ENCODE measurements at regions of chr10 and their contacts with region 1.

Region 1: DNA sequence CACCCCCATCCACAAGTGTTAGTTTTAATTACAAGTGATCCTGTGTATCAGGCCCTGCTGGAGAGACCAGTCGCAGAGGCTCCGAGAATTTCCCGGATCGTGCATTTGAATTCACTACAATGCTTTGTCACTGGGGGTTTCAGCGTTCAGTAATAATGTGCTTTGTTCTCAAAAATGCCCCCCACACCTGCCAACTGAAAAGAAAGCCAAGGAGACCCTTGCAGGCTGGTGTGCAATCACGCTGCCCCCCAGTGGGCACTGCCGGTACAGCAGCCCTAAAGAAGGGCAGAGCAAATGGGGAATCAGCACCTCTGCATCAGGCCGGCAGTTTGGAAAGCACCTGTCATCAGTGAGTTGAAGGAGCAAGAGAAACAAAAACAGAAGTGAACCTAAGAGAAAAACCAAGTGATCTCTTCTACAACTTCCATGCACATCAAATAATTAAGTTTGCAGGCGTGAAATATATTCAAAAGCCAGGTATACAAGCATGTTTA is 177.6 kb downstream of the PARD3 start:
- DNase-seq: peak; percentile 78
- H3K4me3 Mint-ChIP-seq: no peak overlapping the region
- H3K27ac Mint-ChIP-seq: no peak overlapping the region
- H3K4me1 Mint-ChIP-seq: peaks cover 8% of the 10 kb centered on the region
- H3K27me3 Mint-ChIP-seq: no peaks in the 10 kb centered on the region

Region 2: DNA sequence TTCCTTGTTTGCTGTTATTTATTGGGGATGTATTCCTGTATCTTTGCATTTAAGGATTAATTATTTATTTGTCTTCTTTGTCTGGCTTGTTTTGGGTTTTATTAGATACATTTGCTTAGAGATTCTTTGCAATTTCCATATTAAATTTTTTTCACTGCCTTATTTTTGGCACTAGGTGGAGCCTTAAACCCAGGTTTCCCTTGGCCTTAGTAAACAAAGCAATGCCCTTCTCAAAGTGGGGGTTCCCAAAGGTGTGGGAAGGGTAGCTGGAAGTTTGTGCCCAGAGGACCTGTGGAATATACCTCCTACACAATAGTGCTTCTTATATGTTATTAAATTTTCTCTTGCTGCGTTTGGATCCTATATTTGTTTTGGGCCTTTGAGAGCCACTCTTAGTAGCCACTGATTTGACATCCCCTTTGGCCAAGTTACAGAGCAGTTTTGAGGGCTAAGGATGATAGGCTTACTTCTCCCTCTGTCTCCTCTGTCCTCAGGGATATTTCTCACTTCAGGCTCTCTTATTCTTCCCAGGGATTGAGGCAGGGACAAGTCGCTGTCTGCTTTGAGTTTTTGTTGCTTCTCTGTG is 1841.8 kb before region 1 on chr10:
- CTCF ChIA-PET with region 1: no interaction called
- intact Hi-C with region 1: loop called (anchors 5 kb)
- DNase-seq: peak; percentile 17
- H3K4me3 Mint-ChIP-seq: no peak overlapping the region
- H3K27ac Mint-ChIP-seq: no peak overlapping the region
- H3K4me1 Mint-ChIP-seq: no peaks in the 10 kb centered on the region
- H3K27me3 Mint-ChIP-seq: no peaks in the 10 kb centered on the region

Region 3: GRCh38 chr10:33193057-33193700 is 1444.3 kb before region 1 on chr10:
- CTCF ChIA-PET with region 1: interaction called, 8 read pairs
- intact Hi-C with region 1: loop called (anchors 1 kb)
- DNase-seq: peak; percentile 89
- H3K4me3 Mint-ChIP-seq: no peak overlapping the region
- H3K27ac Mint-ChIP-seq: no peak overlapping the region
- H3K4me1 Mint-ChIP-seq: no peaks in the 10 kb centered on the region
- H3K27me3 Mint-ChIP-seq: peaks cover 4% of the 10 kb centered on the region

Region 4: GRCh38 chr10:34223658-34224057 is 413.8 kb before region 1 on chr10:
- CTCF ChIA-PET with region 1: interaction called, 4 read pairs
- intact Hi-C with region 1: loop called (anchors 1 kb)
- DNase-seq: peak; percentile 28
- H3K4me3 Mint-ChIP-seq: no peak overlapping the region
- H3K27ac Mint-ChIP-seq: no peak overlapping the region
- H3K4me1 Mint-ChIP-seq: peaks cover 17% of the 10 kb centered on the region
- H3K27me3 Mint-ChIP-seq: peaks cover 3% of the 10 kb centered on the region

Region 5: DNA sequence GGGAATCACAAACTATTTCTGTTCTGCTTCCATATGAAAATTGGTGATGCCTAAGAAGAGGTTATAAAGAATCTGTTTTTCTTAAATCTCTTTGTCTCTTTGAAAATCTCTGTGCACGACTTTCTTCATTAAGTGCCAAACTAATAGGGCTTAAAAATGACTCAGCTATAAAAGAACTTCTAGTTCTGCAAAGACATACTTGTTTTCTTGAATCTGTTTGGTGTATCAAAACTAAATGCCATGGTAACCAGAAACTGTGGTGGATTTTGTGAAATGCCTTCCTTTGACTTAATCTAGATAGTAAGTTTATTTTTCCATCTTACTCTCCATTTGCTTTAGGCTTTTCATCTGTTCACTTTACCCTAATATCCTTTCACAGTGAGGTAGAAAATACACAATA is 240.1 kb before region 1 on chr10:
- CTCF ChIA-PET with region 1: no interaction called
- intact Hi-C with region 1: loop called (anchors 10 kb)
- DNase-seq: no peak
- H3K4me3 Mint-ChIP-seq: no peak overlapping the region
- H3K27ac Mint-ChIP-seq: no peak overlapping the region
- H3K4me1 Mint-ChIP-seq: no peaks in the 10 kb centered on the region
- H3K27me3 Mint-ChIP-seq: no peaks in the 10 kb centered on the region

Region 6: DNA sequence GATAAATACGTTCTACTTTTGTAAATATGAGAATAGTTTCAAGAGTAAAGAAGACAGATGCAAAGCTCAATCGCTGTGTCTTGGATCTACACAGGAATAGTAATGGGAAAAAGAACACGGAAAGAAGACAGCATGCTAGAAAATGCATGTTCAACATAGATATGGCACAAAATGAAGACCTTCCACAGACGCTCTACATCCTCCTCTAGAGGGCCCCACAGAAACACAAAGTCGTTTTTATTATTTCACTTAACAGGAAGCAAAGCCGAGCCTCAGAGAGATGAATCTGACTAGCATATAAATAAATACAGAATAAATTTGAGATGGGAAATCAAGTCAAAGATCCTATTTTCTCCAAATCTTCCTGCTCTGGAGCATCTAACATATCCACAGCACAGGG is 114.9 kb before region 1 on chr10:
- CTCF ChIA-PET with region 1: interaction called, 5 read pairs
- intact Hi-C with region 1: loop called (anchors 1 kb)
- DNase-seq: no peak
- H3K4me3 Mint-ChIP-seq: no peak overlapping the region
- H3K27ac Mint-ChIP-seq: no peak overlapping the region
- H3K4me1 Mint-ChIP-seq: peaks cover 11% of the 10 kb centered on the region
- H3K27me3 Mint-ChIP-seq: peaks cover 9% of the 10 kb centered on the region

Measured in activated naive CD4-positive, alpha-beta T cell treated with anti-CD3 and anti-CD28 coated beads for 36 hours (primary cell).